ENCODE measurements at regions of chr12 and their contacts with region 1.

Region 1: DNA sequence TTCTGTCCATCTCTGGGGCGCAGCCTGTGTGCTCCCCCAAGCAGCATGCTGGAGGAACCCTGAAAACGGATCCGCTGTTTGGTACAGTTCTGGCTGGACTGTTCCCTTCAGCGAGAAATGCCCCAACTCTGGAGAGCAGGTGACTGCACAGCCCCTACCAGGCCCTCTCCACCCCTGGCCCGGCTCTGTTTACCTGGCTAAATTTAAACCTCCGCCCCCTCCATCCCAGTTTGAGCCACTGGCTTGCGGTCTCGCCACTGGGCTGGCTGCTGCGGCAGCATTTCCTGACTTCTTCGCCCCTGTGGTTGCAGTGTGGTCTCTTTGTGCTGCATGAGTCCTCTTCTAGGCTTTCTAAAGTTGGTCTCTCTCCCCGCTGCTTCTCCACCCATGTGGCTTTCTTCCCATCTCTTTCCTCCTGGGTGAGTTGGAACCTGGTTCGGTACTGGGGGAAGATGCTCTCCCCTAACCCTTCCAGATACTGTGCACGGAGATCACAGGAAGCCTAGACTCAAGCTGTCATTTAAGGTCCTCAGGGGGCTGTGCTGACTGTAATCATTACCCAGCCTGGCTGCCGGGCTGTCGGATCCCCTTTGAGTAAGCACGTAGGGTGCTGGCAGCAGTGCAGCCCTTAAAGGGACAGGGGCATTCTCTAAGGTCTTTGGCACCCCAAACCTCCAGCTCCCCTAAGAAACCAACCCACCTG is 60.6 kb downstream of the FBXL14 start:
- DNase-seq: peak; percentile 56
- H3K4me3 Mint-ChIP-seq: peak overlapping the region; percentile 79
- H3K27ac Mint-ChIP-seq: peak overlapping the region; percentile 53
- H3K4me1 Mint-ChIP-seq: peaks cover 27% of the 10 kb centered on the region
- H3K27me3 Mint-ChIP-seq: peaks cover 54% of the 10 kb centered on the region

Region 2: GRCh38 chr12:1117970-1118563 is 415.7 kb before region 1 on chr12:
- intact Hi-C with region 1: loop called (anchors 2 kb)
- DNase-seq: peak; percentile 52
- H3K4me3 Mint-ChIP-seq: no peak overlapping the region
- H3K27ac Mint-ChIP-seq: no peak overlapping the region
- H3K4me1 Mint-ChIP-seq: peaks cover 6% of the 10 kb centered on the region
- H3K27me3 Mint-ChIP-seq: no peaks in the 10 kb centered on the region

Region 3: DNA sequence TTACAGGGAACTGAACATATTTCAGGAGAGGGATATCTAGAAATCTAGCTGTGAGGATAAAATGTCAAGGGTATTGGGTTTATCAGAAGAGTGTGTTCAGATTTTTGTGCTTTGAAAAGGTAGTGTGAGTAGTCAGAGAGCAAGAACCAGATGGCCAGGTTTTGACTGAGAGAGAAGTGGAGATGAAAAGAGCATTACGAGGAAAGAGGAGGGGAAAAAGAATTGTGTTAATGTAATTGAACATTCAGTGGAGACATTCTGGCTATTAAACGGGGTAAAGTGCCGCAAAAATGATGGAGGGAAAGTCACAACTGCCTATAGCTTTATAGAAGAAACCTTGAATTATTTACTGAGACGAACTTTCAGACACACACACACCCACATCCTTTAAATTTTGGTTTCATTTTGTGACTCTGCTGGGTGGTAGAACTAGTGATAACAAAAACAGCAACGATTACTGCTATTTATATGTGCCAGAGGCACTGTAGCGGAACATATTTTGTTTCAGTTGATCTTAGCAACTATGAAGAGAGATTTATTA is 329.1 kb before region 1 on chr12:
- intact Hi-C with region 1: loop called (anchors 5 kb)
- DNase-seq: peak; percentile 2
- H3K4me3 Mint-ChIP-seq: no peak overlapping the region
- H3K27ac Mint-ChIP-seq: no peak overlapping the region
- H3K4me1 Mint-ChIP-seq: peaks cover 7% of the 10 kb centered on the region
- H3K27me3 Mint-ChIP-seq: no peaks in the 10 kb centered on the region

Region 4: GRCh38 chr12:1262011-1262410 is 271.7 kb before region 1 on chr12:
- intact Hi-C with region 1: no loop called
- DNase-seq: no peak
- H3K4me3 Mint-ChIP-seq: no peak overlapping the region
- H3K27ac Mint-ChIP-seq: no peak overlapping the region
- H3K4me1 Mint-ChIP-seq: no peaks in the 10 kb centered on the region
- H3K27me3 Mint-ChIP-seq: no peaks in the 10 kb centered on the region

Region 5: DNA sequence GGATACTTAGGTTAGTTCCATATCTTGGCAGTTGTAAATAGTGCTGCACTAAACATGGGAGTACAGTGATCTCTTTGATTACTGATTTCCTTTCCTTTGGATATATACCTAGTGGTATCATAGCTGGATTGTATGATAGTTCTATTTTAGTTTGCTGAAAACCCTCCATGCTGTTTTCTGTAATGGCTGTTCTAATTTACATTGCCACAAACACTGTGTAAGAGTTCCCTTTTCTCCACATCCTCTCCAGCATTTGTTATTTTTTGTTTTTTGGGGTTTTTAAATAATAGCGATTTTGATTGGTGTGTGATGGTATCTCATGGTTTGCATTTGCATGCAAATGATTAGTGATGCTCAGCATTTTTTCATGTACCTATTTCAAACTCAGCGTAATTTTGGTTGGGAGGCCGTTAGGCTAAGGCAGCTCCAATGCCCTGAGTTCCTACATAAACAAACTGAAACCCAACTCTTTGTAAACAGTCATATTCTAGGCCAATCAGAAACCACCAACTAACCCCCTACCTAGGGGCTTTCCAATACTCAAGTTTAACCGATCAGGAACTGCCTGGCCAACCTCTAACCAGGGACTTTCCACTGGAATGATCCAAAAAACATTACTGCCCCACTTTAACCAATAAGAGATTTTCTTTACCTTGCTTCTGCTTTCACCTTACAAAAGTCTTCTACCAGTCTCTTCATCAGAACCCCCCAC is 111.0 kb before region 1 on chr12:
- intact Hi-C with region 1: loop called (anchors 2 kb)
- DNase-seq: peak; percentile 46
- H3K4me3 Mint-ChIP-seq: peak overlapping the region; percentile 16
- H3K27ac Mint-ChIP-seq: peak overlapping the region; percentile 73
- H3K4me1 Mint-ChIP-seq: peaks cover 38% of the 10 kb centered on the region
- H3K27me3 Mint-ChIP-seq: no peaks in the 10 kb centered on the region

Region 6: GRCh38 chr12:1474041-1474573 is 59.6 kb before region 1 on chr12:
- intact Hi-C with region 1: loop called (anchors 5 kb)
- DNase-seq: peak; percentile 16
- H3K4me3 Mint-ChIP-seq: no peak overlapping the region
- H3K27ac Mint-ChIP-seq: no peak overlapping the region
- H3K4me1 Mint-ChIP-seq: peaks cover 6% of the 10 kb centered on the region
- H3K27me3 Mint-ChIP-seq: no peaks in the 10 kb centered on the region

Region 7: DNA sequence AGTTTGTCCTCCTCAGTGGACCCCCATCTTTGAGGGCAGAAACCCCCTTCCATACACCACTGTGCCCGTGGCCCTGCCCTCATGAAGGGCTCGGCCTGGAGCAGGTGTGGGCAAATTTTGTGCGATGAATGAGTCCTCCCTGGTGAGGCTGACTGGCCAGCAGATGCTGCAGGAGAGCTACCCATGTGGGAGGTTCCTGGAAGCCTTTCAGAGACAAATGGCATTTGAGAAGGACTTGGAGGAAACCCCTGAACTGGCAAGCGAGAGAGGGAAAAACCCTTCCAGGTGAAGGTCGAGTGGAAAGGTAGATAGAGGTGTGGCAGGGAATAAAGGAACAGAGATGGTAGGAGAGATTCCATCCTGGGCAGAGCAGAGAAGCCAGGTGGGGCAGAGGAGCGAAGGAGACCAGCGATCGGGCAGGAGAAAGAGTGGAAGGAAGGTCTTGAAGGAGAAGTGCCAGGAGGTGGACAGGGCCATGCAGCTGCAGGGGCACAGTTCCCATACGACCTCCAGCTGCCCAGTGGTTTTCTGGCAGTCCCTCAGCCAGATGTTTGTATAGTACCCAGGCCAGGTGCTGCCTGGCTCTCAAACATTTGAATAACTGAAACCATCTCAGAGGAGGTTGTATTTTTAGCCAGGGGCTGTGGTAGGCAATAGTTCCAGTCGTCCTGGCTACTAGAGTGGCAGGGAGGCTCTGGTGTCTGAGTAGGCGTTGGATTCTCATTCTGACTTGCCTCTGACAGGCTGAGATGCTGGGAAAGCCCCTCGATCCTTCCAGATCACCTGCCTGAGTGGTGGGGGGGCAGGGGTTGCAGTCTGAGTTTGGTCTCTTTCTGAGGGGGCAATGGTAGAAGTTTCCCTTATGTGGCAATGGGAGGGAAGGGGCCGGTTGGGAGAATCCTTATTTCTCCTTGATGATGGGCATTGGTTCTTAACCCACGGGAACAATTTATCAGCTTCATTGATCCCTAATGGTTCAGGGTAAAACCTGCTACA is 20.5 kb after region 1 on chr12:
- intact Hi-C with region 1: loop called (anchors 2 kb)
- DNase-seq: no peak
- H3K4me3 Mint-ChIP-seq: peak overlapping the region; percentile 57
- H3K27ac Mint-ChIP-seq: peak overlapping the region; percentile 64
- H3K4me1 Mint-ChIP-seq: peaks cover 10% of the 10 kb centered on the region
- H3K27me3 Mint-ChIP-seq: peaks cover 23% of the 10 kb centered on the region

Region 8: GRCh38 chr12:1583421-1584078 is 49.8 kb after region 1 on chr12:
- intact Hi-C with region 1: loop called (anchors 1 kb)
- DNase-seq: peak; percentile 58
- H3K4me3 Mint-ChIP-seq: no peak overlapping the region
- H3K27ac Mint-ChIP-seq: no peak overlapping the region
- H3K4me1 Mint-ChIP-seq: peaks cover 23% of the 10 kb centered on the region
- H3K27me3 Mint-ChIP-seq: peaks cover 5% of the 10 kb centered on the region